Endothelial cell of umbilical vein (primary cell): ENCODE measurements at regions of chr15 and their contacts with region 1.

Region 1: DNA sequence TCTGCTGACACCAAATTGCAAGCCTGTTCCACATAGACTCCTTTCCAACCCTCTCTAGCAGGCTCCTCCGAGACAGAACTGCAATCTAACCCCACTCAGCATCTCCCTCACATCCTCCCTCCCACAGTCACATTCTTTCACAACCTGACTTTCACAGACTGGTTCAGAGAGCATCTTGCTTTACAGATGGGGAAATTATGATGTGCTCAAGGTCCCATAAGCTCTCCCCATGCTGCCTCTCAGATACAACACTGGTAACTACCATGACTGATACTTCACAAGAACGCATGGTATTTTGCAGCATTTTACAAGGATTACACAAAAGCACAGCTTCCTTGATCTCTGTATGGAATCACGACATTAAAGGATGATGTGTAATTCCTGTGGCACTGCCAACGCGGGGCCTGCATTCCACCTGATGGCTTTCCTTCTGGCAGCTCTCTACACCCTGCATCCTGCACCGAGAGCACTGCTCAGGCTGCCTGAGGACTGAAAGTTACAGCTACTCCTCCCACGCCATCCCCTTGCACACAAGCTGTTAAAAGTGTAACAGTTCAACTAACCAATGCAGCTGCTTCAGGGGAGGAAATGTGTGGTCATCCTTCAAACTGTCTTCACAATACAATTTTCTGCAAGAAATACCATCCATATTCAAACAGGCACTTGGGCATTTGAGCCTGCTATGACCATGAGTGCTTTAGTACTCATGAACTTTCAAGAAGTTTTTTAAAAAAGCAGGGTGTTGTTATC is 27.6 kb downstream of the TBC1D2B start:
- DNase-seq: no peak
- H3K4me3 ChIP-seq: no peak overlapping the region
- H3K27ac ChIP-seq: no peak overlapping the region
- H3K4me1 ChIP-seq: peaks cover 45% of the 10 kb centered on the region
- H3K27me3 ChIP-seq: no peaks in the 10 kb centered on the region
- CTCF ChIP-seq: no peak
- POLR2A ChIP-seq: no peak

Region 2: DNA sequence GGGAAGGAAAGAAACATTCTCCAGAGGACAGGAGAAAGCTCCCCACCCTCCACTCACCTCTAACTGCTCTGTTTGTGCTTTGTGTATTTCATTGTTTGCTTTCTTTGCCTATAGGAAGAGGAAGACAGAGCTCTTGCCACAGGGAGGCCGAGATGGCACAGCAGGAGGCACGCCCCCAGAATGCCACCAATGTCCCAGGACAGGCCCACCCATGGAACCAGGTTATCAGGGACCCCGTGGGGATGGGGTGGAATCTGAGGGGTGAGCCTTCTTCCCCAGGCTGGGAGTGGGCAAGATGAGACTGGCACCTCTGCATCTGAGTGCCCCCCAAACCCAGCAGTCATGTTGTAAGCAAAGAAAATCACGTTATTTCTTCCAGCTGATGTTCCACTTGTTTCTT is 128.2 kb before region 1 on chr15:
- CTCF ChIA-PET with region 1: no interaction called
- POLR2A ChIA-PET with region 1: no interaction called
- dilution Hi-C with region 1: no loop called
- intact Hi-C with region 1: no loop called
- DNase-seq: no peak
- H3K4me3 ChIP-seq: no peak overlapping the region
- H3K27ac ChIP-seq: no peak overlapping the region
- H3K4me1 ChIP-seq: no peaks in the 10 kb centered on the region
- H3K27me3 ChIP-seq: no peaks in the 10 kb centered on the region
- CTCF ChIP-seq: no peak
- POLR2A ChIP-seq: no peak

Region 3: DNA sequence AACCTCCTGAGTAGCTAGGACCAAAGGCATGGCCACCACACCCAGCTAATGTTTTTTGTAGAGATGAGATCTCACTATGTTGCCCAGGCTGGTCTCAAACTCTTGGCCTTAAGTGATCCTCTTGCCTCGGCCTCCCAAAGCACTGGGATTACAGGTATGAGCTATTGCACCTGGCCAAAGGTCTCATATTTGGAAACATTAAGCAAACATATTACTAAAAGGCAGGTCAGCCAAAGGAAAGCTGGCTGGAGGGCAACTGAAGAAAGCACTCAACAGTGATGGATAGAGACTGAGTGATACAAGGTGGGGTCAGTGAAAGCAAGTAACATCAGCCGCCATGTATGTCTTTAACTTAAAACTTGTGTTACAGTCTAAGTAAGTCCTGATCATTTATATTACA is 29.9 kb before region 1 on chr15:
- CTCF ChIA-PET with region 1: no interaction called
- POLR2A ChIA-PET with region 1: no interaction called
- dilution Hi-C with region 1: no loop called
- intact Hi-C with region 1: no loop called
- DNase-seq: no peak
- H3K4me3 ChIP-seq: no peak overlapping the region
- H3K27ac ChIP-seq: no peak overlapping the region
- H3K4me1 ChIP-seq: no peaks in the 10 kb centered on the region
- H3K27me3 ChIP-seq: no peaks in the 10 kb centered on the region
- CTCF ChIP-seq: no peak
- POLR2A ChIP-seq: no peak

Region 4: GRCh38 chr15:78065284-78065872 is 15.5 kb after region 1 on chr15:
- CTCF ChIA-PET with region 1: interaction called, 6 read pairs
- POLR2A ChIA-PET with region 1: no interaction called
- dilution Hi-C with region 1: no loop called
- intact Hi-C with region 1: loop called (anchors 2 kb)
- DNase-seq: peak; percentile 68
- H3K4me3 ChIP-seq: no peak overlapping the region
- H3K27ac ChIP-seq: peak overlapping the region; percentile 27
- H3K4me1 ChIP-seq: peaks cover 61% of the 10 kb centered on the region
- H3K27me3 ChIP-seq: no peaks in the 10 kb centered on the region
- CTCF ChIP-seq: no peak
- POLR2A ChIP-seq: no peak